ENCODE measurements at regions of chr12 and their contacts with region 1.

Region 1: GRCh38 chr12:111636209-111636945 is 37.3 kb upstream of the ATXN2 start:
- DNase-seq: peak in 1 of 2 donors; percentile 91
- H3K4me3 ChIP-seq: peak overlapping the region; percentile 4 to 24
- H3K27ac ChIP-seq: peak overlapping the region; percentile 83
- H3K4me1 ChIP-seq: peaks cover 25% of the 10 kb centered on the region
- H3K27me3 ChIP-seq: no peaks in the 10 kb centered on the region
- CTCF ChIP-seq: no peak
- POLR2A ChIP-seq: no peak

Region 2: DNA sequence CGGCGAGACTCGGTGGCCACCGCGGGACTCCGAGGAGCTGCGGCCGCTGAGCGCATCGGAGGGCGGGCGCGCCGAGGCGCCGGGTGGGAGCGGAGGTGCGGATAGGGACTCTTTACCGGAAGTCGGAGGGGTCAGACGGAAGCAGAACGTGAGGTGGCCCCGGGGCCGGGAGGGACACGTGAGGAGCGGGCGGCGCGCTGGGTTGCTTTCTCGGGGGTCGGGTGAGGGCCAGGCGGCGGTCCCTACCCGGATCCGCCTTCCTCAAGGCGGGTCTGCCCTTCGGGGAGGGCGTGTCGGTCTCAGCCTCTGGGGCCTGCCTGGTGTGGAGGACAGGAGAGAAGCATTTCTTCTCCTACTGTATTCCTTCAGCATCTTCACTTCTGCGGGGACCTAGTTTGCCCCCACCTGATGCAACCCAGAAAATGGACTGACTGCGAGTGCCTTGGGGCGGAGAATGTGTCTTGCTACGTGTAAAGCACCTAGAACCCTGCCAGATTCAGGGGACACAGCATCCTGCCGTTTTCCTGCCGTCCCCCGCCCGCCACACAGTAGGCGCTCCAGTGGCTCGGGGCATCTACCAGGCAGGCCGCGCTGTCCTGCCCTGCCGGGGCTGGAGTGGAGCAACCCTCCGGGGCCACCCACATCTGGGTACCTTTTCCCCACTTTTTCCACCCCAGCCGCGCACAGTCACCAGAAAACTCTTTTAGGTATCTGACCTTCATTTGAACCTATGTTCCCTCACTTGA is 36.7 kb before region 1 on chr12:
- intact Hi-C with region 1: loop called (anchors 5 kb)
- DNase-seq: peak in 1 of 2 donors; percentile 94
- H3K4me3 ChIP-seq: peak overlapping the region; percentile 65 to 88
- H3K27ac ChIP-seq: peak overlapping the region; percentile 95
- H3K4me1 ChIP-seq: peaks cover 31% of the 10 kb centered on the region
- H3K27me3 ChIP-seq: no peaks in the 10 kb centered on the region
- CTCF ChIP-seq: no peak
- POLR2A ChIP-seq: peak in 1 of 2 donors; percentile 60